Natural killer cell (primary cell): ENCODE measurements at regions of chr13 and their contacts with region 1.

Region 1: GRCh38 chr13:60396783-60397703 is at the start of gene TDRD3:
- DNase-seq: peak; percentile 78 to 89
- ATAC-seq: peak; percentile 68 to 86 (median 71)
- H3K4me3 ChIP-seq: peak within 1 kb of the TSS; percentile 94
- H3K4me3 Mint-ChIP-seq: peak within 1 kb of the TSS; percentile 95
- H3K27ac ChIP-seq: peak within 1 kb of the TSS; percentile 90
- H3K27ac Mint-ChIP-seq: peak within 1 kb of the TSS; percentile 91 to 93
- H3K4me1 ChIP-seq: peaks cover 10% of the 10 kb centered on the region
- H3K4me1 Mint-ChIP-seq: peaks cover 27 to 29% of the 10 kb centered on the region in 2 donors
- H3K27me3 ChIP-seq: no peaks in the 10 kb centered on the region
- H3K27me3 Mint-ChIP-seq: peaks cover 0 to 2% of the 10 kb centered on the region in 2 donors
- CTCF ChIP-seq: peak; percentile 69
- total RNA-seq, gene TDRD3: 30.6 to 33.4 (median 32.1) TPM

Region 2: GRCh38 chr13:60163478-60164233 is 233.4 kb before region 1 on chr13 and contains the start of gene DIAPH3:
- intact Hi-C with region 1: loop called (anchors 1 kb)
- DNase-seq: peak; percentile 91 to 94
- ATAC-seq: peak; percentile 99 to 100 (median 99)
- H3K4me3 ChIP-seq: peak within 1 kb of the TSS; percentile 71
- H3K4me3 Mint-ChIP-seq: peak within 1 kb of the TSS; percentile 94
- H3K27ac ChIP-seq: peak within 1 kb of the TSS; percentile 69
- H3K27ac Mint-ChIP-seq: peak within 1 kb of the TSS; percentile 86 to 94
- H3K4me1 ChIP-seq: peaks cover 9% of the 10 kb centered on the region
- H3K4me1 Mint-ChIP-seq: peaks cover 21 to 27% of the 10 kb centered on the region in 2 donors
- H3K27me3 ChIP-seq: no peaks in the 10 kb centered on the region
- H3K27me3 Mint-ChIP-seq: peaks cover 5 to 8% of the 10 kb centered on the region in 2 donors
- CTCF ChIP-seq: no peak
- total RNA-seq, gene DIAPH3: 0.54 to 1.0 (median 0.98) TPM

Region 3: DNA sequence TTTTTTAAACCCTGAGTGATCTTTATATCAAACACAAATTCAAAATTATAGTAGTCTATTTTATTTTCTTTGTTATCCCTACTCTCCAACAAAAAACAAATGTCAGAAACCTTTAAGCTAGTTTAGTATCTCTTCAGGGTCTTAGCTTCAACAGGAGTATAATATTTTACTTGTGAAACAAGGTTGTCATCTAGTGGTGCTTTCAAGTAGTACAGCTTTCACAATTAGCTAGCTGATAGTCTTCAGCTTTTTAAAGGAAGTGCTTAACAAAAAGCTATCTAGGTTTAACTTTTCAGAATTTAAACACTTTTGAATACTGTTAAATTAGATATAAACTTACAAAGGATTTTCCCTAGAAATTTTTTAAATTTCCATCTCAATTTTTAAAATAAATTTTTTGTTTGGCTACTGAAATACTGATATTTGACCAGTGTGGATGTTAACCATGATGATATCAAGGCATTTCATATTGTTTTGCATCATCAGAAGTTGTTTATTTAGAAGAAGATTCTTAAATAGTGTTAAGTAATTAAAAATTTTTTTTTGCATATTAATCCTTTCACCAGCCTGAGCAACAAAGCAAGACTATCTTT is 34.2 kb after region 1 on chr13:
- intact Hi-C with region 1: loop called (anchors 5 kb)
- DNase-seq: peak in 1 of 2 donors; percentile 78
- ATAC-seq: peak; percentile 82 to 89 (median 84)
- H3K4me3 ChIP-seq: no peak overlapping the region
- H3K4me3 Mint-ChIP-seq: no peak overlapping the region
- H3K27ac ChIP-seq: no peak overlapping the region
- H3K27ac Mint-ChIP-seq: no peak overlapping the region
- H3K4me1 ChIP-seq: peaks cover 3% of the 10 kb centered on the region
- H3K4me1 Mint-ChIP-seq: peaks cover 32 to 34% of the 10 kb centered on the region in 2 donors
- H3K27me3 ChIP-seq: no peaks in the 10 kb centered on the region
- H3K27me3 Mint-ChIP-seq: no peaks in the 10 kb centered on the region
- CTCF ChIP-seq: peak; percentile 97